ENCODE measurements at regions of chr2 and their contacts with region 1.

Region 1: DNA sequence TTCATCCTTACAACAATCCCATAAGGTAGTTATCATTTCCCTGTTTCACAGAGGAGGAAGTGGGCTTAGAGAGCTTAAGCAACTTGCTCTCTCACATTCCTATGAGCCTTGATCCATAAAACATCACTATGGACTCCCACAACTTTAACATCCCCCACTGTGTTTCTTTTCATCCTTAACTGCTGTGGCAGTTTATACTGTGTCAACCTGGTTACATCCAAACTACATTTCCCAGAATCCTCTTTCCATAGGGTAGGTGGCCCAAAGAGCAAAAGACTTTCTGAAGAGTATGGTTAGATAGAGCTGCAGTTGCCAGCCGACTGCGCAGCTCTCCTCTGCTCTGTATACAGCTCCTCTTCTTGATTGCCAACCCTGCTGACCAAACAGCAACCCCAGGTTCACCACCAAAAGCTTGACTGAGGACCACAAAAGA is 22.5 kb downstream of the MAP3K2 start:
- DNase-seq: no peak
- H3K4me3 Mint-ChIP-seq: no peak overlapping the region
- H3K27ac Mint-ChIP-seq: no peak overlapping the region
- H3K4me1 Mint-ChIP-seq: peaks cover 47% of the 10 kb centered on the region
- H3K27me3 Mint-ChIP-seq: no peaks in the 10 kb centered on the region

Region 2: GRCh38 chr2:127324635-127325034 is 40.6 kb before region 1 on chr2:
- CTCF ChIA-PET with region 1: no interaction called
- intact Hi-C with region 1: no loop called
- DNase-seq: no peak
- H3K4me3 Mint-ChIP-seq: no peak overlapping the region
- H3K27ac Mint-ChIP-seq: no peak overlapping the region
- H3K4me1 Mint-ChIP-seq: peaks cover 6% of the 10 kb centered on the region
- H3K27me3 Mint-ChIP-seq: no peaks in the 10 kb centered on the region

Region 3: GRCh38 chr2:127381762-127382161 is 16.5 kb after region 1 on chr2:
- CTCF ChIA-PET with region 1: no interaction called
- intact Hi-C with region 1: loop called (anchors 2 kb)
- DNase-seq: no peak
- H3K4me3 Mint-ChIP-seq: no peak overlapping the region
- H3K27ac Mint-ChIP-seq: no peak overlapping the region
- H3K4me1 Mint-ChIP-seq: peaks cover 76% of the 10 kb centered on the region
- H3K27me3 Mint-ChIP-seq: no peaks in the 10 kb centered on the region

Region 4: GRCh38 chr2:128329607-128330006 is 964.4 kb after region 1 on chr2:
- CTCF ChIA-PET with region 1: no interaction called
- intact Hi-C with region 1: no loop called
- DNase-seq: peak; percentile 44
- H3K4me3 Mint-ChIP-seq: no peak overlapping the region
- H3K27ac Mint-ChIP-seq: no peak overlapping the region
- H3K4me1 Mint-ChIP-seq: peaks cover 7% of the 10 kb centered on the region
- H3K27me3 Mint-ChIP-seq: peaks cover 1% of the 10 kb centered on the region

Measured in activated naive CD4-positive, alpha-beta T cell treated with anti-CD3 and anti-CD28 coated beads for 36 hours (primary cell).